Aorta (tissue), 5 donors: ENCODE measurements at regions of chr6 and their contacts with region 1.

Region 1: DNA sequence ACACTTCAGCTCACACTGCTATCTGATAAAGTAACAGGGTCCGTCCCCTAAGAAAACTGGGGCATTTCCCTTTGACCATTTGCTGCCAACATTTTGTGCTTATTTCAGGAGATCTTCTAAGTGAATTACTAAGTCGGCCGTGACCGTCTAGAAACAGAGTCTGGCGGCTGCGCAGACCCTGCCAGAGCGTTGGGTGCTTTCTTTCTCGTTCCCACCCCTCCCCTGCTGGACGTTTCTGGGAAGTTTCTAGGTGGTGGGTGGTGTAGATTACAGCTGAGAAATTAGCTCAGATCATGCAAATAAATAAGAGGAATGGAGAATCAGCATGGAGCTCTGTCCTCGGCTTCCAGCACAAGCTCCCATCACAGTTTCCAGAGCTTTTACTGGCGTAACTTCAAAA is 128.1 kb downstream of the MYLK4 start:
- DNase-seq: peak; percentile 86
- ATAC-seq: peak; percentile 70
- H3K4me3 ChIP-seq: no peak overlapping the region
- H3K27ac ChIP-seq: peak overlapping the region; percentile 91 to 94
- H3K4me1 ChIP-seq: peaks cover 5 to 13% of the 10 kb centered on the region in 2 donors
- H3K27me3 ChIP-seq: no peaks in the 10 kb centered on the region

Region 2: DNA sequence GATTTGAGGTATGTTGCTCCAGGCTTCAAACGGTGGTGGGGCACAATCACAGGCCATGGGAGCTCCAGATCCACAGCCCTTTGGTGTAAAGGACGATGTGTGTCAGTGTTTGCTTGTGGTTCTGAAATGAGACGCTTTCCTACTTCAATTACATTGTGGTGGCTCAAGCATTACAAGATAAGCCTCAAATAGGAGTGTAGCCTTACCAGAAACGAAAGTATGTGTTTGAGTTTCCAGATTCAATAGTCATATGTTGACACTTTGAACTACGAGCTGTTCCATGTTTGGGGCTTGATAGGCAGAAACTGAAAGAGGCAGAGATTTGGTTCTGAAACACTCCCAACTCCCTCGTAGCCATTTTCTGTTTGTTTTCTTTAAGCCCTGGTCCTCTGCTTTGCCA is 59.0 kb before region 1 on chr6:
- intact Hi-C with region 1: loop called (anchors 2 to 5 kb)
- DNase-seq: no peak
- ATAC-seq: peak; percentile 31
- H3K4me3 ChIP-seq: peak overlapping the region in 1 of 2 donors; percentile 48
- H3K27ac ChIP-seq: peak overlapping the region; percentile 45 to 93
- H3K4me1 ChIP-seq: peaks cover 0 to 3% of the 10 kb centered on the region in 2 donors
- H3K27me3 ChIP-seq: no peaks in the 10 kb centered on the region